Transverse colon (tissue), 4 donors: ENCODE measurements at regions of chr1 and their contacts with region 1.

Region 1: DNA sequence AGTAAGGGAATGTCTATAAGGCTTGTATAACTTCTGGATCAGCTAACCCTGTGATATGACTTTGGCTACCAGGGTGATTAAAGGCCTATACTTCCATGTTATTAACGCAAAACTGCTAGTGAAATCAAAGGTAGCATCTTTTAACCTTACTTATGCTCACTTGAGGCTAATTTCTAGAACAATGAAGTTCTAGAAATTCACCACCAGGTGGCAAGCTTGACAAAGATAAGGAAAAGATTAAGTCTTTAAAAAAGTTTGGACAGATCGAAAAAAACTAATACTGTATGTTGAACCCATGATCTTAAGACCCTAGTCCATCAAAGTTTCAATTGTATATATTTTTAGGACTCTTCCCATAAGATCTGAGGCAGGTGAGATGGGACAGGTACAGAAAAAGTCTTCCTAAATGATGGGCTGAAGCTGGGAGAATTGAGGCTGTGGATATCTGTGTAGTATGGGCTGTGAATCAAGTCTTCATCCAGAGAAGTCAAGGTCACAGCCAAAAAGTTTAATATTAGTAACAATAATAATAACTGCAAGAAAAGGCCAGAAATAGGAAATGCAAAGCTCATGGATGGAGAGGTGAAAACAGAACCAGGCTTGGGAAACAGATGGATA is 18.8 kb downstream of the KYAT3 start:
- DNase-seq: no peak
- H3K4me3 ChIP-seq: no peak overlapping the region
- H3K27ac ChIP-seq: no peak overlapping the region
- H3K4me1 ChIP-seq: peaks cover 0 to 9% (median 0%) of the 10 kb centered on the region in 4 donors
- H3K27me3 ChIP-seq: no peaks in the 10 kb centered on the region
- CTCF ChIP-seq: peak; percentile 54 to 61 (median 59)
- EP300 ChIP-seq: no peak
- POLR2A ChIP-seq: no peak

Region 2: GRCh38 chr1:89023026-89023425 is 49.4 kb after region 1 on chr1:
- in situ Hi-C with region 1: no loop called
- intact Hi-C with region 1: no loop called
- DNase-seq: no peak
- H3K4me3 ChIP-seq: peak overlapping the region in 2 of 4 donors; percentile 44 to 55
- H3K27ac ChIP-seq: peak overlapping the region; percentile 84 to 91 (median 88)
- H3K4me1 ChIP-seq: peaks cover 3 to 35% (median 6%) of the 10 kb centered on the region in 4 donors
- H3K27me3 ChIP-seq: no peaks in the 10 kb centered on the region
- CTCF ChIP-seq: no peak
- EP300 ChIP-seq: no peak
- POLR2A ChIP-seq: no peak

Region 3: GRCh38 chr1:89454845-89455521 is 481.4 kb after region 1 on chr1:
- in situ Hi-C with region 1: loop called in 1 of 4 experiments (anchors 10 kb)
- intact Hi-C with region 1: no loop called
- DNase-seq: peak; percentile 33
- H3K4me3 ChIP-seq: no peak overlapping the region
- H3K27ac ChIP-seq: no peak overlapping the region
- H3K4me1 ChIP-seq: no peaks in the 10 kb centered on the region
- H3K27me3 ChIP-seq: no peaks in the 10 kb centered on the region
- CTCF ChIP-seq: peak; percentile 52 to 70 (median 60)
- EP300 ChIP-seq: no peak
- POLR2A ChIP-seq: no peak